ENCODE measurements at regions of chr15 and their contacts with region 1.

Region 1: DNA sequence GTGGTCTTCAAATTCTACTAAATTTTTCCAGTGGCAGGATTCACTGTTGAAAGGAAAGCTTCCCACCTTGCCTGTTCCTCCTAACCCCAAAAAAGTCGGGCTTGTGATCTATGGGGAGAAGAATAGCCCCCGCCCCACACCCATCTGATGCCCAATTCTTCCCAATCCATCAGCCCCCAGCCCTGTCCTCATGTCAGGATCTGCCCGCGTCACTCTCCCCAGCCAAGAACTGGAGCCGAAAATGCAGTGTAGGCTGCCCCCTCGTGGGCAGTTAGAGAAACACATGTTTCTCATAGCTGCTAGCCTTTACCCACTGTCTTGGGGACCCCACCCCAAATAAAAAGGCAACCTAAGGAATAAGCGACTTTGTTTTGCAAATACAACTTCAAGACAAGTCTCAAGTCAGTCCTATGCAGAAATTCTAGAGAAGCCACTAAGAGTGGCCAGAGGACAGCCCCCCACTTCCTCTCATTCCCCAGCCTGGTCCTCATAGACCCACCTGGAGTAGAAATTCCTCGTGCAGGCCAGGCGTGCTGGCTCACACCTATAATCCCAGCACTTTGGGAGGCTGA is 13.0 kb upstream of the CSK start:
- DNase-seq: no peak
- ATAC-seq: peak; percentile 53
- H3K4me3 Mint-ChIP-seq: no peak overlapping the region
- H3K27ac Mint-ChIP-seq: no peak overlapping the region
- H3K4me1 Mint-ChIP-seq: peaks cover 37% of the 10 kb centered on the region
- H3K27me3 Mint-ChIP-seq: no peaks in the 10 kb centered on the region
- CTCF ChIP-seq: peak; percentile 53

Region 2: GRCh38 chr15:73518180-73518862 is 1250.5 kb before region 1 on chr15:
- CTCF ChIA-PET with region 1: no interaction called
- POLR2A ChIA-PET with region 1: no interaction called
- intact Hi-C with region 1: no loop called
- DNase-seq: no peak
- ATAC-seq: no peak
- H3K4me3 Mint-ChIP-seq: no peak overlapping the region
- H3K27ac Mint-ChIP-seq: no peak overlapping the region
- H3K4me1 Mint-ChIP-seq: no peaks in the 10 kb centered on the region
- H3K27me3 Mint-ChIP-seq: peaks cover 9% of the 10 kb centered on the region
- CTCF ChIP-seq: no peak

Region 3: GRCh38 chr15:74635228-74635627 is 133.6 kb before region 1 on chr15:
- CTCF ChIA-PET with region 1: interaction called, 200 read pairs
- POLR2A ChIA-PET with region 1: interaction called, 4 read pairs
- intact Hi-C with region 1: loop called (anchors 1 kb)
- DNase-seq: peak; percentile 61
- ATAC-seq: peak; percentile 64
- H3K4me3 Mint-ChIP-seq: no peak overlapping the region
- H3K27ac Mint-ChIP-seq: no peak overlapping the region
- H3K4me1 Mint-ChIP-seq: peaks cover 18% of the 10 kb centered on the region
- H3K27me3 Mint-ChIP-seq: no peaks in the 10 kb centered on the region
- CTCF ChIP-seq: no peak

Region 4: GRCh38 chr15:74758736-74759135 is 10.1 kb before region 1 on chr15:
- CTCF ChIA-PET with region 1: interaction called, 12 read pairs
- POLR2A ChIA-PET with region 1: interaction called, 3 read pairs
- intact Hi-C with region 1: no loop called
- DNase-seq: no peak
- ATAC-seq: no peak
- H3K4me3 Mint-ChIP-seq: no peak overlapping the region
- H3K27ac Mint-ChIP-seq: no peak overlapping the region
- H3K4me1 Mint-ChIP-seq: peaks cover 4% of the 10 kb centered on the region
- H3K27me3 Mint-ChIP-seq: peaks cover 16% of the 10 kb centered on the region
- CTCF ChIP-seq: no peak

Region 5: DNA sequence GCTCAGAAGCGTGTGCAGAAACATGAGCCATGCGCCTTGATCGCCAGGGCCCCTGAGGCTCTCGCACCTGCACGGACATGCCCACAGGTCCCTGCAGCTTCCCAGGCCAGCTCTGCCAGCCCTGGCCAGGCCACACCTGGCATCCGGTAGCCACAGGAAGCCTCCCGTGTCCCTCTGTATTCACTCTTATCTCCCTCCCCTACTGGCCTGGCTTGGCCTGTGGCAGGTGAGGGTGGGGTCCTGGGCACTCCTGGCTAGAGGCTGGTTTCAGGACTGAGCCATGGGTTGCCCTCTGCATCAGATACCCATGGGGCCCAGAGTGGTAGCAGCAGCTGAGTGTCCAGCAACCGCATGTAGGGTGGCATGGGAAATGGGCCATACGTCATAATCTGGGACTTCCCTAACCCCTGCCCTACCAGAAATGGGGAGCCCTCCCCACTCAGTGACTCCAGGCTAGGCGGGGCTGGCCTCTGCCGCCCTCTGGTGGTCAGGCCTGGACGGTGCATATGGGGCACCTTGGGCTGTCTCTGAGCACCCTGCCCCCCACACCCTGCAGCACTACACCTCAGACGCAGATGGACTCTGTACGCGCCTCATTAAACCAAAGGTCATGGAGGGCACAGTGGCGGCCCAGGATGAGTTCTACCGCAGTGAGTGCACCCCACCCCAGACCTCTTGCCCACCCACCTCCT is 31.1 kb after region 1 on chr15:
- CTCF ChIA-PET with region 1: interaction called, 1,146 read pairs
- POLR2A ChIA-PET with region 1: interaction called, 2,569 read pairs
- intact Hi-C with region 1: loop called (anchors 1 kb)
- DNase-seq: peak; percentile 88
- ATAC-seq: peak; percentile 89
- H3K4me3 Mint-ChIP-seq: peak overlapping the region; percentile 41
- H3K27ac Mint-ChIP-seq: peak overlapping the region; percentile 89
- H3K4me1 Mint-ChIP-seq: peaks cover 64% of the 10 kb centered on the region
- H3K27me3 Mint-ChIP-seq: no peaks in the 10 kb centered on the region
- CTCF ChIP-seq: peak; percentile 67

Region 6: GRCh38 chr15:74906446-74907162 is 137.7 kb after region 1 on chr15 and contains the start of gene FAM219B:
- CTCF ChIA-PET with region 1: interaction called, 52 read pairs
- POLR2A ChIA-PET with region 1: interaction called, 7 read pairs
- intact Hi-C with region 1: loop called (anchors 1 kb)
- DNase-seq: peak; percentile 77
- ATAC-seq: peak; percentile 92
- H3K4me3 Mint-ChIP-seq: peak within 1 kb of the TSS; percentile 98
- H3K27ac Mint-ChIP-seq: peak within 1 kb of the TSS; percentile 97
- H3K4me1 Mint-ChIP-seq: peaks cover 41% of the 10 kb centered on the region
- H3K27me3 Mint-ChIP-seq: no peaks in the 10 kb centered on the region
- CTCF ChIP-seq: no peak
- total RNA-seq, gene FAM219B: 76.0 and 90.4 TPM in 2 replicates